HCT116 (cell line): ENCODE measurements at regions of chr14 and their contacts with region 1.

Region 1: GRCh38 chr14:35146711-35147149 is 24.4 kb downstream of the PRORP start:
- DNase-seq: no peak
- ATAC-seq: no peak
- H3K4me3 ChIP-seq: no peak overlapping the region
- H3K27ac ChIP-seq: no peak overlapping the region
- H3K4me1 ChIP-seq: no peaks in the 10 kb centered on the region
- H3K27me3 ChIP-seq: no peaks in the 10 kb centered on the region
- CTCF ChIP-seq: no peak
- POLR2A ChIP-seq: no peak
- RAD21 ChIP-seq: no peak

Region 2: GRCh38 chr14:34826661-34827060 is 320.1 kb before region 1 on chr14:
- CTCF ChIA-PET with region 1: no interaction called
- POLR2A ChIA-PET with region 1: no interaction called
- RAD21 ChIA-PET with region 1: no interaction called
- intact Hi-C with region 1: no loop called
- DNase-seq: no peak
- ATAC-seq: no peak
- H3K4me3 ChIP-seq: no peak overlapping the region
- H3K27ac ChIP-seq: no peak overlapping the region
- H3K4me1 ChIP-seq: no peaks in the 10 kb centered on the region
- H3K27me3 ChIP-seq: no peaks in the 10 kb centered on the region
- CTCF ChIP-seq: no peak
- POLR2A ChIP-seq: no peak
- RAD21 ChIP-seq: no peak

Region 3: GRCh38 chr14:35134328-35135123 is 12.2 kb before region 1 on chr14:
- CTCF ChIA-PET with region 1: interaction called, 3 read pairs
- POLR2A ChIA-PET with region 1: no interaction called
- RAD21 ChIA-PET with region 1: no interaction called
- intact Hi-C with region 1: loop called (anchors 1 kb)
- DNase-seq: no peak
- ATAC-seq: no peak
- H3K4me3 ChIP-seq: no peak overlapping the region
- H3K27ac ChIP-seq: no peak overlapping the region
- H3K4me1 ChIP-seq: no peaks in the 10 kb centered on the region
- H3K27me3 ChIP-seq: no peaks in the 10 kb centered on the region
- CTCF ChIP-seq: no peak
- POLR2A ChIP-seq: no peak
- RAD21 ChIP-seq: no peak